GM13976 (cell line): ENCODE measurements at regions of chrX and their contacts with region 1.

Region 1: DNA sequence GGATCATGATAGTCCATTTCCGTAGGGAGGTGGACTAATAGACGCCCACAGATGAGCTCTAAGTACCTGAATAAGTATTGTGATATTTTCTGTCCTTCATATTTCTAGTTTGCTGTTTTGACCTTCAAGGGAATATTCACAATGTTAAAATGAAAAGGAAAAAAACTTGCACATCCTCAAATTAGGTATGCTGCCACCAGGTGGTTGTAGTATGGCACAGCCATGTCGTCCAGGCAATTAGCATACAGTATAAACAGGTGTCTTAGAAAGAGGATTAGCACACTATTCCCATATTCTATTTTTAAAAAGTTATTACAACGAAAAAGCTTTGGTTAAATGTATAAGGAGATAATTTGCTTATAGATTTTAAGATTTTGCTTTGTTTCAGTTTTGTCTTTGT is 802.0 kb downstream of the RPA4 start:
- DNase-seq: peak; percentile 18
- CTCF ChIP-seq: peak; percentile 63

Region 2: GRCh38 chrX:96791559-96791958 is 894.2 kb before region 1 on chrX:
- in situ Hi-C with region 1: loop called (anchors 25 kb)
- DNase-seq: no peak
- CTCF ChIP-seq: no peak